ENCODE measurements at regions of chr16 and their contacts with region 1.

Region 1: DNA sequence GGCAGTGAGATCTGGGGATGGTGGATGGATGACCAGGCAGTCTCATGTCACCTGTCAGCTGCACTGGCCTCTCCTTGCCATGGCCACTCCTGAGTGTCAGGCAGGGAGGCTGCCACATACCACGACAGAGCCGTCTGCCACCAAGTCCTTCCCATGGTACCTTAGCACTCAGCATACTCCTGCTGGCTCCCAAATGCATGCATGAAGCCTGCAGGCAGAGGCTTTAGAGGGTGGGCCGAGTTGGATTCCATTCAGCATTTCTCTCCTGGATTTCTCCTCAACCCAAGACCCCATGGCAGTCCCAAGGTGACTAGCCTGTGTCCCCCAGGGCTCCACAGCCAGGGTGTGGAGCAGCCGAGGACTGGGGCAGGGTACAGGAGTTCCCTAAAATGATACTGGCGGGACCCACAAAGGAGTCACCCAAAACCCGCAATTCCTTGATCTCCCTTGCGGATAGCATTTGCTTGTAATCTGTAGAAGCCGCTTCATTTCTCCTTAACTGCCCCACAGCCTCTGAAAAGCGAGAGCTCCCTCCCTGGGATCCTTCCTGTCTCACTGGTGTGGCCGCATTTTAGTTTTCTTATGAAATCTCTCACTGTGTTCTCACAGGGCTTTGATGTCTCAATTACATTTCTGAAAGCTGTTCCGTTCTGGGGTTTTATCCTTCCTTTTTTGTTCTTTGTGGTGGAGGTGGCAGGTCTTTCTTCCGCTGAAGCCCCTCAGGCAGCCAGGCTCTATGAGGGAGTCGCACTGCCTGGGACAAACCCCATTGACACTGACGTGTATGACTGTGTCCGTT is 141.4 kb downstream of the SOCS1 start:
- DNase-seq: no peak
- H3K4me3 ChIP-seq: no peak overlapping the region
- H3K27ac ChIP-seq: no peak overlapping the region
- H3K4me1 ChIP-seq: peaks cover 0 to 14% (median 4%) of the 10 kb centered on the region in 4 donors
- H3K27me3 ChIP-seq: no peaks in the 10 kb centered on the region
- CTCF ChIP-seq: no peak
- EP300 ChIP-seq: no peak
- POLR2A ChIP-seq: no peak

Region 2: GRCh38 chr16:9119795-9120194 is 1994.8 kb before region 1 on chr16:
- intact Hi-C with region 1: loop called (anchors 10 kb)
- DNase-seq: peak; percentile 75
- H3K4me3 ChIP-seq: no peak overlapping the region
- H3K27ac ChIP-seq: no peak overlapping the region
- H3K4me1 ChIP-seq: peaks cover 0 to 48% (median 31%) of the 10 kb centered on the region in 4 donors
- H3K27me3 ChIP-seq: no peaks in the 10 kb centered on the region
- CTCF ChIP-seq: no peak
- EP300 ChIP-seq: no peak
- POLR2A ChIP-seq: no peak

Measured in sigmoid colon (tissue), 7 donors.